AG04449 (cell line): ENCODE measurements at regions of chr1 and their contacts with region 1.

Region 1: GRCh38 chr1:6438047-6438525 is 13.5 kb downstream of the ESPN start:
- DNase-seq: no peak
- H3K4me3 ChIP-seq: no peak overlapping the region
- CTCF ChIP-seq: peak; percentile 88

Region 2: GRCh38 chr1:6343506-6344405 is 94.3 kb before region 1 on chr1:
- CTCF ChIA-PET with region 1: interaction called, 19 read pairs
- POLR2A ChIA-PET with region 1: no interaction called
- DNase-seq: peak; percentile 45
- H3K4me3 ChIP-seq: no peak overlapping the region
- CTCF ChIP-seq: peak; percentile 98

Region 3: DNA sequence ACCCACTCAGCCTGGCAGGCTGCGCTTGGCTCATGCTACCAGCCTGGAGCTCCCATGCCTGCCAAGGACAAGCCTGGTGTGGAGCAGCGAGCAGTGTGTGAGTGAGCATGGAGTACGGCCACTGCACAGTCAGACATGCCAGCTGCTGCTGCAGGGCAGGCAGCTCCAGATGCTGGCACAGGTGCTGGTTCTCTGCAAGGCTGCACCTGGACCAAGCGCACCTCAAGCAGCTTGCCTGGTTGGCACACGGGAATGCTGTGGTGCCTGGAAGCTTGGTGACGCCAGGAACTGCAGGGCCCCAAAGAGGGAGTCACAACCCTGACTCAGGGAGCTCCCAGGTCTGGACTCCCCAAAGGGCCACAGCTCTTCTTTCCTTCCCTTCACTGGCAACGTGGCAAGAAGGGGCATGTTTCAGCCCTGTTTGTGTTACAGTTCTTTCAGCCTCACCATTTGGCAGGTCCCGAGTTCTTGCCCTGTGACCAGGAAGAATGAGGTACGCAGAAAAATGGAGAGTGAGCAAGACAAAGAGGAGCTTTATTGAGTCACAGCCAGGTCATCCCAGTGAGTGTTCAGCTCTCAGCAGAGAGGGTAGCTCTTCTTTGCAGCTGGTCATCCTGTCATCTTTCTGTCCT is 70.6 kb before region 1 on chr1:
- CTCF ChIA-PET with region 1: interaction called, 107 read pairs
- POLR2A ChIA-PET with region 1: no interaction called
- DNase-seq: no peak
- H3K4me3 ChIP-seq: no peak overlapping the region
- CTCF ChIP-seq: no peak

Region 4: DNA sequence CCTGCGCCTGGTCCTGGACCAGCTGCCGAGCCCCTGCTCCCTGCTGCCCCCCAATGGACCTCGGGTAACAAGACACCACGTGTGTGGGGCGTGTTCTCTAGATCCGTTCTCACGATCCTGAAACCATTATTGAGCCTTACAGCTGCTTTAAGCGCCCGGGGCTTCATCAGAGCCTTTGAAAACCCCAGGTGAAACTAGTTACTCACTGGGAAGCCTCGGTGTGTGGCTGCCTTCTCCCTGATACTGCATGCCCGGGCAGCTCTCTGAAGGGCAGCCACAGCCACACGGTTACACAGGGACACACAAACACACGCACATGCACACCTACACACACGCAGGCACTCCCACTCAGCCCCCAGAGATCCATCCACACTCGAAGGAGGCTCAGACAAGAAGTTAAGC is 23.6 kb before region 1 on chr1:
- CTCF ChIA-PET with region 1: interaction called, 37 read pairs
- POLR2A ChIA-PET with region 1: no interaction called
- DNase-seq: no peak
- H3K4me3 ChIP-seq: peak overlapping the region; percentile 27; the same call in 1 of the 2 replicates
- CTCF ChIP-seq: peak; percentile 73

Region 5: GRCh38 chr1:6423321-6423999 is 14.6 kb before region 1 on chr1:
- CTCF ChIA-PET with region 1: interaction called, 37 read pairs
- POLR2A ChIA-PET with region 1: no interaction called
- DNase-seq: no peak
- H3K4me3 ChIP-seq: no peak overlapping the region
- CTCF ChIP-seq: peak; percentile 72

Region 6: GRCh38 chr1:6448749-6449631 is 10.9 kb after region 1 on chr1:
- CTCF ChIA-PET with region 1: interaction called, 38 read pairs
- POLR2A ChIA-PET with region 1: no interaction called
- DNase-seq: no peak
- H3K4me3 ChIP-seq: no peak overlapping the region
- CTCF ChIP-seq: peak; percentile 30